CD8-positive, alpha-beta T cell (primary cell): ENCODE measurements at regions of chr19 and their contacts with region 1.

Region 1: DNA sequence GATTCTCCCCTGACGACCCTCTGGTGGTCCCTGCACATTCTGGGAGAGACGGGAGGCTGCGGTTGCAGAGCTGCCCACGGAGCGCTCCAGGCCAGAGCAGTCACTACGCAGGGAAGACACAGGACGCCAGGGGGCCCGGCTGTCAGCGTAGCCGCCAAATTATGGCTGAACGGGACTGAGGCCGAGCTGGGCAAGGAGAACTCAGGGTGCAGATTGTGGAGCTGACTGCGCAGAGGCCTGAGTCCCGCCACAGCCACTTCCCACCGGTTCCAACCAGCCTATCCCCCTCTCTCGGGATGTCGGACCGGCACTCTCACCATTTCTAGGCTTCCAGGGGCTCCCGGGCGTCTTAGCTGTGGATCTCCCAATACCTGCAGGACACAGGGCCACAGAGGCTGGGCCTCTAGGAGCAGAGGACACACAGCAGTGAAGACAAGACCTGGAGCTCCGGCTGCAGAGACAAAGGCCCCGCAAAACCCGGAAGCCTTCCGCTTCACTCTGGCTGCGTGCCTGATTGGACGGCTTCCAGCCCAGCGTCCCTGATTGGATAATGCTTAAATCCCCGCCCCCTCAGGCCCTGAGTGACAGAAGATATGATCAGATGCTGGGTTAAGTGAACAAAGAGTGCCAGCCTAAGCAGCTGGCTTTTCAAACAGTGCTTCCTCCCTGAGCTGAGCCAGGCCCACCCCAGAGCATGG is at the start of gene ZNF737:
- DNase-seq: peak; percentile 87 to 97 (median 93)
- ATAC-seq: peak; percentile 95
- H3K4me3 ChIP-seq: peak within 1 kb of the TSS; percentile 80 to 92
- H3K4me3 Mint-ChIP-seq: peak within 1 kb of the TSS; percentile 99
- H3K27ac ChIP-seq: peak within 1 kb of the TSS; percentile 81 to 91
- H3K27ac Mint-ChIP-seq: peak within 1 kb of the TSS; percentile 99
- H3K4me1 ChIP-seq: no peaks in the 10 kb centered on the region
- H3K4me1 Mint-ChIP-seq: peaks cover 35% of the 10 kb centered on the region
- H3K27me3 ChIP-seq: no peaks in the 10 kb centered on the region
- H3K27me3 Mint-ChIP-seq: no peaks in the 10 kb centered on the region
- CTCF ChIP-seq: no peak
- total RNA-seq, gene ZNF737: 11.2 to 11.5 TPM

Region 2: DNA sequence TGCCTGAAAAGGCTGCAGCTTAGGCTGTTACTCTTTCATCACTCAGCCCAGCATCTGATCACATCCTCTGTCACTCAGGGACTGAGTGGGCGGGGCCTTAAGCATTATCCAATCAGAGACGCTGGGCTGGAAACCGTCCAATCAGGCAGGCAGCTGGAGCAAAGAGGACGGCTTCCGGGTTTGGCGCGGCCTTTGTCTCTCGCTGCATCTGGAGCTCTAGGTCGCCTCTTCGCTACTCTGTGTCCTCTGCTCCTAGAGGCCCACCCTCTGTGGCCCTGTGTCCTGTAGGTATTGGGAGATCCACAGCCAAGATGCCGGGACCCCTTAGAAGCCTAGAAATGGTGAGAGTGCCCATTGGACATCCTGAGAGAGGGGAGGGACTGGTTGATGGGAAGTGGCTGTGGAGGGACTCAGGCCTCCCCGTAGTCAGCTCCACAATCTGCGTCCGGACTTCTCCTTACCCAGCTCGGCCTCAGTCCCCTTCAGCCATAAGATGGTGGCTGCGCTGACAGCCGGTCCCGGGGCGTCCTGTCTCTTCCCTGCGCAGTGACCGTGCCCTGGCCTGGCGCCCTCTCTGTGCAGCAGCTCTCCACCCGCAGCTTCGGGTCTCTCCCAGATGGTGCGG is 398.3 kb before region 1 on chr19 and contains the start of gene ZNF486:
- CTCF ChIA-PET with region 1: no interaction called
- POLR2A ChIA-PET with region 1: interaction called, 14 read pairs
- intact Hi-C with region 1: no loop called
- DNase-seq: peak; percentile 83 to 97 (median 92)
- ATAC-seq: peak; percentile 97
- H3K4me3 ChIP-seq: peak within 1 kb of the TSS; percentile 74 to 95
- H3K4me3 Mint-ChIP-seq: peak within 1 kb of the TSS; percentile 97
- H3K27ac ChIP-seq: peak within 1 kb of the TSS; percentile 54 to 80
- H3K27ac Mint-ChIP-seq: peak within 1 kb of the TSS; percentile 92
- H3K4me1 ChIP-seq: peaks cover 13% of the 10 kb centered on the region
- H3K4me1 Mint-ChIP-seq: peaks cover 57% of the 10 kb centered on the region
- H3K27me3 ChIP-seq: no peaks in the 10 kb centered on the region
- H3K27me3 Mint-ChIP-seq: no peaks in the 10 kb centered on the region
- CTCF ChIP-seq: no peak
- total RNA-seq, gene ZNF486: 3.7 to 4.7 TPM

Region 3: GRCh38 chr19:20333508-20333907 is 232.0 kb before region 1 on chr19:
- CTCF ChIA-PET with region 1: no interaction called
- POLR2A ChIA-PET with region 1: no interaction called
- intact Hi-C with region 1: no loop called
- DNase-seq: peak in 1 of 9 experiments; percentile 35
- ATAC-seq: no peak
- H3K4me3 ChIP-seq: no peak overlapping the region
- H3K4me3 Mint-ChIP-seq: no peak overlapping the region
- H3K27ac ChIP-seq: no peak overlapping the region
- H3K27ac Mint-ChIP-seq: no peak overlapping the region
- H3K4me1 ChIP-seq: no peaks in the 10 kb centered on the region
- H3K4me1 Mint-ChIP-seq: peaks cover 3% of the 10 kb centered on the region
- H3K27me3 ChIP-seq: no peaks in the 10 kb centered on the region
- H3K27me3 Mint-ChIP-seq: peaks cover 4% of the 10 kb centered on the region
- CTCF ChIP-seq: no peak

Region 4: GRCh38 chr19:20607943-20608342 is 42.5 kb after region 1 on chr19:
- CTCF ChIA-PET with region 1: no interaction called
- POLR2A ChIA-PET with region 1: no interaction called
- intact Hi-C with region 1: no loop called
- DNase-seq: no peak
- ATAC-seq: no peak
- H3K4me3 ChIP-seq: no peak overlapping the region
- H3K4me3 Mint-ChIP-seq: no peak overlapping the region
- H3K27ac ChIP-seq: no peak overlapping the region
- H3K27ac Mint-ChIP-seq: no peak overlapping the region
- H3K4me1 ChIP-seq: no peaks in the 10 kb centered on the region
- H3K4me1 Mint-ChIP-seq: peaks cover 5% of the 10 kb centered on the region
- H3K27me3 ChIP-seq: no peaks in the 10 kb centered on the region
- H3K27me3 Mint-ChIP-seq: no peaks in the 10 kb centered on the region
- CTCF ChIP-seq: no peak

Region 5: GRCh38 chr19:20661150-20661819 is 95.8 kb after region 1 on chr19 and contains the start of gene ZNF626:
- CTCF ChIA-PET with region 1: no interaction called
- POLR2A ChIA-PET with region 1: interaction called, 40 read pairs
- intact Hi-C with region 1: loop called (anchors 2 kb)
- DNase-seq: peak; percentile 78 to 97 (median 90)
- ATAC-seq: peak; percentile 98
- H3K4me3 ChIP-seq: peak within 1 kb of the TSS; percentile 67 to 91
- H3K4me3 Mint-ChIP-seq: peak within 1 kb of the TSS; percentile 94
- H3K27ac ChIP-seq: peak within 1 kb of the TSS; percentile 73 to 91
- H3K27ac Mint-ChIP-seq: peak within 1 kb of the TSS; percentile 97
- H3K4me1 ChIP-seq: peaks cover 12% of the 10 kb centered on the region
- H3K4me1 Mint-ChIP-seq: peaks cover 43% of the 10 kb centered on the region
- H3K27me3 ChIP-seq: no peaks in the 10 kb centered on the region
- H3K27me3 Mint-ChIP-seq: no peaks in the 10 kb centered on the region
- CTCF ChIP-seq: no peak
- total RNA-seq, gene ZNF626: 5.7 to 6.6 TPM

Region 6: GRCh38 chr19:21047716-21048115 is 482.2 kb after region 1 on chr19:
- CTCF ChIA-PET with region 1: no interaction called
- POLR2A ChIA-PET with region 1: no interaction called
- intact Hi-C with region 1: no loop called
- DNase-seq: no peak
- ATAC-seq: no peak
- H3K4me3 ChIP-seq: no peak overlapping the region
- H3K4me3 Mint-ChIP-seq: no peak overlapping the region
- H3K27ac ChIP-seq: no peak overlapping the region
- H3K27ac Mint-ChIP-seq: peak overlapping the region; percentile 78
- H3K4me1 ChIP-seq: no peaks in the 10 kb centered on the region
- H3K4me1 Mint-ChIP-seq: peaks cover 21% of the 10 kb centered on the region
- H3K27me3 ChIP-seq: no peaks in the 10 kb centered on the region
- H3K27me3 Mint-ChIP-seq: no peaks in the 10 kb centered on the region
- CTCF ChIP-seq: no peak

Region 7: GRCh38 chr19:21141787-21142464 is 576.5 kb after region 1 on chr19 and contains the start of gene ZNF431:
- CTCF ChIA-PET with region 1: interaction called, 3 read pairs
- POLR2A ChIA-PET with region 1: interaction called, 5 read pairs
- intact Hi-C with region 1: loop called in 1 of 2 experiments (anchors 10 kb)
- DNase-seq: peak; percentile 79 to 96 (median 88)
- ATAC-seq: peak; percentile 99
- H3K4me3 ChIP-seq: peak within 1 kb of the TSS; percentile 68 to 90
- H3K4me3 Mint-ChIP-seq: peak within 1 kb of the TSS; percentile 97
- H3K27ac ChIP-seq: peak within 1 kb of the TSS; percentile 65 to 85
- H3K27ac Mint-ChIP-seq: peak within 1 kb of the TSS; percentile 97
- H3K4me1 ChIP-seq: peaks cover 9% of the 10 kb centered on the region
- H3K4me1 Mint-ChIP-seq: peaks cover 46% of the 10 kb centered on the region
- H3K27me3 ChIP-seq: no peaks in the 10 kb centered on the region
- H3K27me3 Mint-ChIP-seq: no peaks in the 10 kb centered on the region
- CTCF ChIP-seq: no peak
- total RNA-seq, gene ZNF431: 31.2 to 32.4 TPM

Region 8: DNA sequence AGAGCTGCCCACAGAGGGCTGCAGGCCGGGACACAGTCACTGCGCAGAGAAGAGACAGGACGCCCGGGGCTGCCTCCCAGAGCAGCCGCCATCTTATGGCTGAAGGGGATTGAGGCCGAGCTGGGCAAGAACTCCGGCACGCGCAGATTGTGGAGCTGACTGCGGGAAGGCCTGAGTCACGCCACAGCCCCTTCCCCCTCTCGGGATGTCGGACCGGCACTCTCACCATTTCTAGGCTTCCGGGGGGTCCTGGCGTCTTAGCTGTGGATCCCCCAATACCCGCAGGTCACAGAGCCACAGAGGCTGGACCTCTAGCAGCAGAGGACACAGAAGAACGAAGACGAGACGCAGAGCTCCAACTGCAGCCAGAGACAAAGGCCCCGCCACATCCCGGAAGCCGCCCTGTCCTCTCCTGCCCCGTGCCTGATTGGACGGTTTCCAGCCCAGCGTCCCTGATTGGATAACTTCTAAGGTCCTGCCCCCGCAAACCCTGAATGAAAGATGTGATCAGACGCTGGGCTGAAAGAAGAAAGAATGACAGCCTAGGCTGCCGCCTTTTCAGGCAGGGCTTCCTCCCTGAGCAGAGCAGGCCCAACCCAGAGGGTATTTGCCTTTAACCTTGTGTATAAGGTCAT is 1270.5 kb after region 1 on chr19 and contains the start of gene ZNF43:
- CTCF ChIA-PET with region 1: no interaction called
- POLR2A ChIA-PET with region 1: no interaction called
- intact Hi-C with region 1: loop called in 1 of 2 experiments (anchors 10 kb)
- DNase-seq: peak; percentile 85 to 96 (median 93)
- ATAC-seq: peak; percentile 97
- H3K4me3 ChIP-seq: peak within 1 kb of the TSS; percentile 84 to 85
- H3K4me3 Mint-ChIP-seq: peak within 1 kb of the TSS; percentile 98
- H3K27ac ChIP-seq: peak within 1 kb of the TSS; percentile 75 to 84
- H3K27ac Mint-ChIP-seq: peak within 1 kb of the TSS; percentile 97
- H3K4me1 ChIP-seq: peaks cover 9% of the 10 kb centered on the region
- H3K4me1 Mint-ChIP-seq: peaks cover 34% of the 10 kb centered on the region
- H3K27me3 ChIP-seq: no peaks in the 10 kb centered on the region
- H3K27me3 Mint-ChIP-seq: no peaks in the 10 kb centered on the region
- CTCF ChIP-seq: no peak
- total RNA-seq, gene ZNF43: 29.9 to 31.8 TPM